T-cell (primary cell): ENCODE measurements at regions of chr7 and their contacts with region 1.

Region 1: GRCh38 chr7:145082366-145083161 is 246.7 kb upstream of the TPK1 start:
- DNase-seq: no peak
- ATAC-seq: no peak
- H3K4me3 ChIP-seq: no peak overlapping the region
- H3K4me3 Mint-ChIP-seq: no peak overlapping the region
- H3K27ac ChIP-seq: no peak overlapping the region
- H3K27ac Mint-ChIP-seq: no peak overlapping the region
- H3K4me1 ChIP-seq: no peaks in the 10 kb centered on the region
- H3K4me1 Mint-ChIP-seq: no peaks in the 10 kb centered on the region
- H3K27me3 ChIP-seq: peaks cover 0 to 5% of the 10 kb centered on the region in 2 experiments
- H3K27me3 Mint-ChIP-seq: peaks cover 0 to 15% of the 10 kb centered on the region in 2 donors

Region 2: GRCh38 chr7:144606261-144606660 is 476.3 kb before region 1 on chr7:
- CTCF ChIA-PET with region 1: interaction called in 1 of 2 experiments, 10 read pairs
- POLR2A ChIA-PET with region 1: no interaction called
- DNase-seq: no peak
- ATAC-seq: no peak
- H3K4me3 ChIP-seq: no peak overlapping the region
- H3K4me3 Mint-ChIP-seq: no peak overlapping the region
- H3K27ac ChIP-seq: no peak overlapping the region
- H3K27ac Mint-ChIP-seq: no peak overlapping the region
- H3K4me1 ChIP-seq: no peaks in the 10 kb centered on the region
- H3K4me1 Mint-ChIP-seq: no peaks in the 10 kb centered on the region
- H3K27me3 ChIP-seq: no peaks in the 10 kb centered on the region
- H3K27me3 Mint-ChIP-seq: no peaks in the 10 kb centered on the region